CD4-positive, alpha-beta T cell (primary cell): ENCODE measurements at regions of chr16 and their contacts with region 1.

Region 1: DNA sequence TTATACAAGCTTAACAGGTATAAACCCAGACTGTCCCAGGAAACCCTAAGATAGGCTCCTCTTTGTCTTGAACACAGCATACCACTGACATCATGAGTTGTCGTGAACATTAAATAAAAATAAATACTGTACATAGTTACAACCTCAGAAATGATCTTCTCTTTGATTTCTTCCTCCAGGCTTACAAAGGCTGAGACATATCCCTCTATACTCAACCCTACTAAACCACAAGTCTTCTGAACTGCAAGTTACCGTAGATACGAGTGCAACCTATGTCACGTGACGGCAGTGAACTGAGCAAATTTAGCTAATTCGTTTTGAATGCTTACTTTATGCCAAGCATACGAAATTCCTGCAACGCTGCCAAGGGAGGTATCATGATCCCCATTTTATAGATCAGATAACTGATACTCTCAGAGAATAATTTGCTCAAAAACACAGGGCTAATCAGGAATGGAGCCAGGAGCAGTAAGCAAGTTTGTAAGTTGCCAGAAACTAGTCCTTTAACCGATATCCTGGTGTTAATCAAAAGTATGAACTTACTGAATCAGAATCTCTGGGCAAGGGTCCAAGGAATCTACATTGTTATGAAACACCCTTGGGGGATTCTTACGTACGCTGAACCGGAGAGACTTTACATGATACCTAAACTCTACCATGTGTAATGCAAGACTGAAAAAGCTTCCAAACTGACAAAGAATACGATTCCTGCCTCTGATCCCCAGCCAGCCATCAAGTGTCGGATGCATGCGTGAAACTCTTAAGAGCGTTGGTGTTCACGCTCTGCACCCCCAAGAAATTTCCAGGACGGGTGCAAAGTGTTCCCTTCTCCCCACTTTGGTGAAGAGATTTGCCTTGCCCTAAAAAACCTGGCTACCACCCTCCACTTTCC is 106.2 kb downstream of the XYLT1 start:
- DNase-seq: peak in 13 of 14 experiments; percentile 37 to 92 (median 54)
- ATAC-seq: peak; percentile 82
- H3K4me3 ChIP-seq: peak overlapping the region; percentile 8
- H3K4me3 Mint-ChIP-seq: peak overlapping the region; percentile 40
- H3K27ac ChIP-seq: peak overlapping the region; percentile 89 to 92
- H3K27ac Mint-ChIP-seq: peak overlapping the region; percentile 93
- H3K4me1 ChIP-seq: peaks cover 91% of the 10 kb centered on the region
- H3K4me1 Mint-ChIP-seq: peaks cover 99% of the 10 kb centered on the region
- H3K27me3 ChIP-seq: no peaks in the 10 kb centered on the region
- H3K27me3 Mint-ChIP-seq: no peaks in the 10 kb centered on the region
- CTCF ChIP-seq: no peak

Region 2: DNA sequence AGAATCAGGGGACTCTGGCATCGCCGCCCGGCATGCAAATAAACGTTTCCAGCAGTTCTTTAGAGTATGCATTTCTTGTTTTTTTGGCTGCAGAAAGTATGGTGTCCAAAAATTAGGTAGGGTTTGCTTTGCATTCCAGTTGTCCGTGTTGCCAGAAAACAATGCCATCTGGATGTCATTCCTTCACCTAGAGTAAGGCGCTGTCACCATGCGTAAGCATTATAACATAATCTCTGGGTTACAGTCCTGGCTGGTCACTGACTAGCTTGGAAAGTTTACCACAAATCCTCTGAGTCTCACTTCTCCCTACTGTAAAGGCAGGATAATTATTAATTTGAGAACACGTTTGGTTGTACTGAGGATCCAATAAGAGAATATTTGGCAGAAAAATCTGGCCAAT is 351.5 kb before region 1 on chr16:
- CTCF ChIA-PET with region 1: no interaction called
- POLR2A ChIA-PET with region 1: no interaction called
- intact Hi-C with region 1: loop called in 1 of 2 experiments (anchors 1 kb)
- DNase-seq: no peak
- ATAC-seq: no peak
- H3K4me3 ChIP-seq: peak overlapping the region; percentile 55
- H3K4me3 Mint-ChIP-seq: peak overlapping the region; percentile 74
- H3K27ac ChIP-seq: peak overlapping the region in 1 of 2 donors; percentile 76
- H3K27ac Mint-ChIP-seq: peak overlapping the region; percentile 86
- H3K4me1 ChIP-seq: peaks cover 11% of the 10 kb centered on the region
- H3K4me1 Mint-ChIP-seq: peaks cover 31% of the 10 kb centered on the region
- H3K27me3 ChIP-seq: no peaks in the 10 kb centered on the region
- H3K27me3 Mint-ChIP-seq: no peaks in the 10 kb centered on the region
- CTCF ChIP-seq: no peak

Region 3: GRCh38 chr16:17343028-17343427 is 21.5 kb before region 1 on chr16:
- CTCF ChIA-PET with region 1: interaction called, 4 read pairs
- POLR2A ChIA-PET with region 1: interaction called, 21 read pairs
- intact Hi-C with region 1: loop called (anchors 1 to 2 kb)
- DNase-seq: peak in 11 of 14 experiments; percentile 6 to 76 (median 34)
- ATAC-seq: peak; percentile 83
- H3K4me3 ChIP-seq: no peak overlapping the region
- H3K4me3 Mint-ChIP-seq: peak overlapping the region; percentile 75
- H3K27ac ChIP-seq: no peak overlapping the region
- H3K27ac Mint-ChIP-seq: peak overlapping the region; percentile 86
- H3K4me1 ChIP-seq: peaks cover 72% of the 10 kb centered on the region
- H3K4me1 Mint-ChIP-seq: peaks cover 89% of the 10 kb centered on the region
- H3K27me3 ChIP-seq: no peaks in the 10 kb centered on the region
- H3K27me3 Mint-ChIP-seq: no peaks in the 10 kb centered on the region
- CTCF ChIP-seq: no peak

Region 4: DNA sequence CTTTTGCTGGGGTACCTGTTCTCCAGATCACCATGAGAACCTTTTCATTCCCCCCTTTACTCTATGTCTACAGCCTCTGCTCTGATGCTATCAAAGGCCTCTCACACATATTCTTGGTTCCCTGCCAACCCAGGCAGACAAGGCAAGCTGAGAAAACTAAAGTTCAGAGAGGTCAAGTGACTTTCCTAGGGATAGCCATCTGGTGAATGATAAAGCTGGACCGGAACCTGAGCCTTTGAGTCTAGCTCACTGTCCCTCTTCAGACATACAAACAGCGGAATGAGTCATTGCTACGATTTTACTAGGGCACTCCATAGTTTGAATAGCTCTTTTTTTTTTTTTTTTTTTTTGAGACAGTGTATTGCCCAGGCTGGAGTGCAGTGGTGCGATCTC is 32.9 kb after region 1 on chr16:
- CTCF ChIA-PET with region 1: interaction called, 3 read pairs
- POLR2A ChIA-PET with region 1: interaction called, 51 read pairs
- intact Hi-C with region 1: loop called (anchors 1 to 5 kb)
- DNase-seq: peak in 7 of 14 experiments; percentile 15 to 71 (median 35)
- ATAC-seq: peak; percentile 19
- H3K4me3 ChIP-seq: no peak overlapping the region
- H3K4me3 Mint-ChIP-seq: peak overlapping the region; percentile 82
- H3K27ac ChIP-seq: peak overlapping the region; percentile 59 to 89
- H3K27ac Mint-ChIP-seq: peak overlapping the region; percentile 99
- H3K4me1 ChIP-seq: peaks cover 82% of the 10 kb centered on the region
- H3K4me1 Mint-ChIP-seq: peaks cover 73% of the 10 kb centered on the region
- H3K27me3 ChIP-seq: no peaks in the 10 kb centered on the region
- H3K27me3 Mint-ChIP-seq: no peaks in the 10 kb centered on the region
- CTCF ChIP-seq: no peak

Region 5: GRCh38 chr16:17633104-17633951 is 268.8 kb after region 1 on chr16:
- CTCF ChIA-PET with region 1: no interaction called
- POLR2A ChIA-PET with region 1: no interaction called
- intact Hi-C with region 1: no loop called
- DNase-seq: no peak
- ATAC-seq: no peak
- H3K4me3 ChIP-seq: no peak overlapping the region
- H3K4me3 Mint-ChIP-seq: no peak overlapping the region
- H3K27ac ChIP-seq: no peak overlapping the region
- H3K27ac Mint-ChIP-seq: no peak overlapping the region
- H3K4me1 ChIP-seq: no peaks in the 10 kb centered on the region
- H3K4me1 Mint-ChIP-seq: no peaks in the 10 kb centered on the region
- H3K27me3 ChIP-seq: peaks cover 0 to 5% of the 10 kb centered on the region in 2 experiments
- H3K27me3 Mint-ChIP-seq: peaks cover 35% of the 10 kb centered on the region
- CTCF ChIP-seq: no peak

Region 6: GRCh38 chr16:17784073-17784472 is 419.5 kb after region 1 on chr16:
- CTCF ChIA-PET with region 1: no interaction called
- POLR2A ChIA-PET with region 1: no interaction called
- intact Hi-C with region 1: no loop called
- DNase-seq: no peak
- ATAC-seq: no peak
- H3K4me3 ChIP-seq: no peak overlapping the region
- H3K4me3 Mint-ChIP-seq: no peak overlapping the region
- H3K27ac ChIP-seq: no peak overlapping the region
- H3K27ac Mint-ChIP-seq: no peak overlapping the region
- H3K4me1 ChIP-seq: no peaks in the 10 kb centered on the region
- H3K4me1 Mint-ChIP-seq: no peaks in the 10 kb centered on the region
- H3K27me3 ChIP-seq: peaks cover 3 to 6% of the 10 kb centered on the region in 2 experiments
- H3K27me3 Mint-ChIP-seq: peaks cover 16% of the 10 kb centered on the region
- CTCF ChIP-seq: no peak